Right ventricle myocardium superior (tissue), 1 donor: ENCODE measurements at regions of chr19 and their contacts with region 1.

Region 1: DNA sequence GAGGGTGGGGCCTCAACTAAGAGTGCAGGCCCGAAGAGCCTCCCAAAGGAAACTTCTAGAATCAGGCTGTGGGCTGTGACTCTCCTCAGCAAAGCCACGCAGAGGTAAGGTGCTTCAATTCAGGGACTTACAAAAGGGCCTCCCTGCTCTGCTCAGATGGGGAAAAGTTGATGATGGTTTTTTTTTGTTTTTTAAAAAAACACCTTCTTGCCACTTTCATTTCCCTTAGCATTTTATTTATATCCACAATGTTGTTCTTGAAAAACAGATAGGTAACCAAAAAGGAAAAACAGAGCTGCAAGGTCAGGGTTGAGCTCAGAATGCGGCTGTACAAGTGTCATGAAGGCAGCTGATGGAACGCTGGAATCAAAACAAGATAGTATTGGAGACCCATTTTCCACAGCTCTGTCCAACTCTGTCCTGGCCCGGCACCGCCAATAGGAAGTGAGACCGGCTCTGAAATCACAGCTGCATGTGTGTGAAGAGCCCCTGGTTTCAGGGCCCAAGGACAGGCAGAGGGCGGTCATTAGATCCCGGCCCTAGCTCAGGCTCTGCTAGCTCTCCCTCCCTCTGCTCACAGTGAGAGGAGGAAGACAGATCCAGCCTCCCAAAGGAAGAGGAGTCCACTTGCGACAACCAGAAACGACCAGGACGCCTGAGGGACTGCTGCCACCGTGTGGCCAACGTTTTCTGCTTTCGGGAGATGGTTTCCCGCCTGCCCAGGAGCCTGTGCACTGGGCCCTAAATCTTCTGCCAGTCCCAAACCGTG is 58.3 kb downstream of the KLF2 start:
- DNase-seq: peak; percentile 93
- ATAC-seq: peak; percentile 81

Region 2: DNA sequence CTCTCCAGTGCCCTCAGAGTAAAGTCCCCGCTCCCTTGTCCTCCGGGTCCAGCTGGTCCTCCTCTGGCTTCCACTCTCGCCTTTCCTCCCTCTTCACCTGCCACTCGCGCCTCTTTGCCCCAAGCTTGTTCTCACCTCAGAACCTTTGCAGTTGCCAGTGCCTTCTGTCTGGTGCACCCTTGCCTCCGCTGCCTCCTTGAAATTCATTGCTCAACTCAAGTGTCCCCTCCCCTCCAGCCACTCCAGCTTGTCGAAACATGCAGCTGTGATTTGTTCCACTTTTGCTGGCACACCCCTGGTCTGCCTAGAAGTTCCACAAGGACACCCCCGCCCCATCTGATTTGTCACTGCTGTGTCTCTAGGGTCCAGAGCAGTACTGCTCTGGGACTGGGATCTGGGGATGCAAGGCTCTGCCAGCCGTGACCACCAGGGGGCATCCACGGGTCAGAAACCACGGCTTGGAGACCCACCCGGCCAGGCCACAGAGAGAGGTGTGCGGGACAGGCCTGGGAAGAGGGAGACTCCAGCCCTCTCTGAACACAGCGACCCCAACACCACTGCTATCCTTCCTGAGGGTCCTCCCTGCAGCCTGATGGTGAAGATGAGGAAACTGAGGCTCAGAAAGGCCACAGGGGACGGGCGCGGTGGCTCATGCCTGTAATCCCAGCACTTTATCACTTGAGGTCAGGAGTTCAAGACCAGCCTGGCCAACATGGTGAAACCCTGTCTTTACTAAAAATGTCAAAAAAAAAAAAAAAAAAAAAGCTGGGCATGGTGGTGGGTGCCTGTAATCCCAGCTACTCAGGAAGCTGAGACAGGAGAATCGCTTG is 135.4 kb before region 1 on chr19:
- intact Hi-C with region 1: loop called (anchors 2 kb)
- DNase-seq: peak; percentile 94
- ATAC-seq: peak; percentile 97

Region 3: DNA sequence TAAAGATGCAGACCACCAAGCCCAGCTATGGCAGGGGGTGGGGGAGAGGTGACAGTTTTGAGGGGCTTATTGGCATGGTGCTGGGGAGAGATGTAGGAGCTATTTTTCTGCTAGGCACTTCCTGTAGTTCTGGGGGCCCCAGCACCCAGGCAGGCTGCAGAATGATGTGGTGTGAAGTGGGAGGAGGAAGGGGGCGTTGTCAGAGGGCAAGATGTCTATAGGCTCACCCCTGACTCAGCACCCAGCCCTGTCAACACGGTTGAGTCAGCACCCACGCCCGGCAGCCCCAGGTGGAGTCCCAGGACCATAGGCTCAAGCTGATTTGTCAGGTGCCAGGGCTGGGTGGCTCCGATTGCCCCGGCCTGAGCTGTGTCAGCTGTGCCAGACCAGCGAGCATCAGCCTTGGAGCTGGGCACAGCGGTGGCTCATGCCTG is 52.6 kb before region 1 on chr19:
- intact Hi-C with region 1: loop called (anchors 5 kb)
- DNase-seq: peak; percentile 79
- ATAC-seq: peak; percentile 7